ENCODE measurements at regions of chr7 and their contacts with region 1.

Region 1: DNA sequence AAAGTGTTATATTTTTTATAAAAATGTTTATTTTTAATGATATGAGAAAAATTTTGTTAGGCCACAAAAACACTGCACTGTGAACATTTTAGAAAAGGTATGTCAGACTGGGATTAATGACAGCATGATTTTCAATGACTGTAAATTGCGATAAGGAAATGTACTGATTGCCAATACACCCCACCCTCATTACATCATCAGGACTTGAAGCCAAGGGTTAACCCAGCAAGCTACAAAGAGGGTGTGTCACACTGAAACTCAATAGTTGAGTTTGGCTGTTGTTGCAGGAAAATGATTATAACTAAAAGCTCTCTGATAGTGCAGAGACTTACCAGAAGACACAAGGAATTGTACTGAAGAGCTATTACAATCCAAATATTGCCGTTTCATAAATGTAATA is 64.8 kb upstream of the CAPZA2 start:
- DNase-seq: no peak
- H3K4me3 ChIP-seq: no peak overlapping the region
- H3K27ac ChIP-seq: no peak overlapping the region
- H3K4me1 ChIP-seq: no peaks in the 10 kb centered on the region
- H3K27me3 ChIP-seq: no peaks in the 10 kb centered on the region
- CTCF ChIP-seq: no peak
- EP300 ChIP-seq: no peak
- POLR2A ChIP-seq: no peak

Region 2: GRCh38 chr7:116687801-116688201 is 109.8 kb before region 1 on chr7:
- intact Hi-C with region 1: loop called in 1 of 4 experiments (anchors 10 kb)
- DNase-seq: no peak
- H3K4me3 ChIP-seq: no peak overlapping the region
- H3K27ac ChIP-seq: no peak overlapping the region
- H3K4me1 ChIP-seq: no peaks in the 10 kb centered on the region
- H3K27me3 ChIP-seq: no peaks in the 10 kb centered on the region
- CTCF ChIP-seq: no peak
- EP300 ChIP-seq: no peak
- POLR2A ChIP-seq: no peak

Region 3: DNA sequence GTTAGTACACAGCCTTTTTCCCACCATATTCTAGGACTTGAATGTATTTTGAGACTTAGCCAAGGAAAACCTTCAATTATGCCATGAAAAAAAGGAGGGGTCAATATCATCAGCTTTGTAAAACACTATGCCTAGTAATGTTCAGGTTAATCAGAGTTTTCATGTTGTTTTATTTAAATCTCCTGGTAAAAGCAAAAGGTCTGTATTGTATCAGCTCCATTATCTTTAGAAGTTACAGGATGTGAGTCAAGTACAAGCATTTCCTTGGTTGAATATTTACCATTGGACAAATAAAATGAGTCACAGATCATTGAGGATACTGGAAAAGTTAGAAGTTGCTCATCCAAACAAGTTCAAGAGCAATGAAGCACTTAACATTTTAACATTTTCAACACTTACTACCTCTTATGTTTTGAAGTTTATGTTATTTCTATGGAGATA is 25.2 kb before region 1 on chr7:
- intact Hi-C with region 1: no loop called
- DNase-seq: no peak
- H3K4me3 ChIP-seq: no peak overlapping the region
- H3K27ac ChIP-seq: no peak overlapping the region
- H3K4me1 ChIP-seq: no peaks in the 10 kb centered on the region
- H3K27me3 ChIP-seq: no peaks in the 10 kb centered on the region
- CTCF ChIP-seq: no peak
- EP300 ChIP-seq: no peak
- POLR2A ChIP-seq: no peak

Region 4: DNA sequence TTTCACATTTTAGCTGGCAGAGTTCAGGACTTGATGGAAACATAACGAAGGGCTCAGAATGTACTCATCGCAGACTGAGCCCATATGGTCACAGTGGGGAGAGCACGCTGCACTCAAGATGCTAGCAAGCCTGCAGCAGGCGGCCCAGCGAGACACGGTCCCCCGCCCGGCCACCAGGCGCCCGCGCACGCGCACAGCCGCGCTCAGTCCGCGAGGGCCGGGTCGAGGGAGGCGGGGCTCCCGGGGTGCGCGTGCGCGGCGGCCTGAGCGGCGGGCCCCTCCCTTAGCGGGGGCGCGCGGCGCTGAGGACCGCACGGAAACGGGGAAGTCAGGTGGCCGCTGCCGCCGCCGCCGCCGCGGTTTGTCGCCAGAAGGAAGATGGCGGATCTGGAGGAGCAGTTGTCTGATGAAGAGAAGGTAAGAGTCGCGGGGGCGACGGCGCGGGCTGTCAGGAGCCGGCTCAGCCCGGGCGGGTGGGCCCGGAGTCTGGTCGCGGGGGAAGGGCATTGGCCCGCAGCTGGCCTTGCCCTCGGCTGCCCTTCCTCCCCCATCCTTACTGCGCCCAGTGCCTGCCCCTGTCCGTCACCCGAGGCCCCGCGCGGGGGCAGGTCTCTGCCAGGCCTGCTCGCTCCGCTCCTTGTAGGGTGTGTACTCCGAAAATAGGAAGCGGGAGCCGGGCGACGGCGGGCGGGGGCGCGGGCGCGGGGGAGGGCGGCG is 64.8 kb after region 1 on chr7 and contains the start of gene CAPZA2:
- intact Hi-C with region 1: no loop called
- DNase-seq: peak; percentile 89 to 95 (median 93)
- H3K4me3 ChIP-seq: peak within 1 kb of the TSS; percentile 88
- H3K27ac ChIP-seq: peak within 1 kb of the TSS; percentile 97 to 98
- H3K4me1 ChIP-seq: peaks cover 4% of the 10 kb centered on the region
- H3K27me3 ChIP-seq: no peaks in the 10 kb centered on the region
- CTCF ChIP-seq: peak in 2 of 3 donors; percentile 82 to 87
- EP300 ChIP-seq: peak; percentile 33
- POLR2A ChIP-seq: peak; percentile 73
- total RNA-seq, gene CAPZA2: 57.2 to 184 (median 134) TPM

Region 5: DNA sequence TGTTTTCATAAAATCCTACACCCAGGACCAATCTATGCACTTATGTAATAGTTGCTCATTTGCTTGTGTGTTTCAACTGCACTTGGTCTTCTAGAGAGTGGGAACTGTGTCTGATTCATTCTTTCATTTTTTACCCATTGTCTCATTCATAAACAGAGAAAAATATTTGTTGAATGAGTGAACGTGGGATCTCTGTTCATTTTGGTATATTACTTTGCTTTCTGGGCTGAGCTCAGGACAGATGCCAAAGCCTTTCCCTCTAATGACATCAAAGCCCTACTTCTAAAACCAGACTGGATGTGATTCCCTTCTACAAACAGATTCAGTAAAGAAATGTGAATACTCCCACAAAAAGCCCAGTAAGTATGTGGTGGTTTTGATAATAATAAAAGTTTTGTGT is 300.8 kb after region 1 on chr7:
- intact Hi-C with region 1: no loop called
- DNase-seq: no peak
- H3K4me3 ChIP-seq: no peak overlapping the region
- H3K27ac ChIP-seq: no peak overlapping the region
- H3K4me1 ChIP-seq: peaks cover 3% of the 10 kb centered on the region
- H3K27me3 ChIP-seq: no peaks in the 10 kb centered on the region
- CTCF ChIP-seq: no peak
- EP300 ChIP-seq: no peak
- POLR2A ChIP-seq: no peak

Region 6: DNA sequence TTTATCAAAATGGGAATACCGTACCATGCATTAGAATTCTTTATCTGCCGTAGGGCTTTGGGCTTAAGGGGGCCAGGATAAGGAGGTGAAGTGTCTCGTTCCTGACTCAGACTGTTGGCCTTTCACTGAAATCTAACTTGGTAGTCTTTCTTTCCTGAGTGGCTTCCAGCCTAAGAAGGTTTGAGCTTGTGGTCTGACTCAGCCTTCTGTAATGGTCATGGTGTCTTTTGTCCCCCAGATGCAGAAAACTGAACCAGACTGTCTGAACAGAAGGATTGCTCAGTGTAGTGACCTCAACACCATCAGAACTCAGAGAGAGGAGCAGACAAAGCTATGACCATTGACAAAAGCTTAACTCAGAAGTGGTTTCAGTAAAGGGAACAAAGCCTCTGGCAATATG is 485.8 kb after region 1 on chr7:
- intact Hi-C with region 1: no loop called
- DNase-seq: no peak
- H3K4me3 ChIP-seq: no peak overlapping the region
- H3K27ac ChIP-seq: no peak overlapping the region
- H3K4me1 ChIP-seq: no peaks in the 10 kb centered on the region
- H3K27me3 ChIP-seq: no peaks in the 10 kb centered on the region
- CTCF ChIP-seq: no peak
- EP300 ChIP-seq: no peak
- POLR2A ChIP-seq: no peak

Measured in ovary (tissue), 10 donors.